Sigmoid colon (tissue), 7 donors: ENCODE measurements at regions of chr3 and their contacts with region 1.

Region 1: GRCh38 chr3:45507820-45508317 is 86.7 kb upstream of the LIMD1 start:
- DNase-seq: no peak
- H3K4me3 ChIP-seq: no peak overlapping the region
- H3K27ac ChIP-seq: peak overlapping the region; percentile 20 to 48 (median 24)
- H3K4me1 ChIP-seq: peaks cover 0 to 9% (median 0%) of the 10 kb centered on the region in 4 donors
- H3K27me3 ChIP-seq: no peaks in the 10 kb centered on the region
- CTCF ChIP-seq: no peak
- EP300 ChIP-seq: no peak
- POLR2A ChIP-seq: no peak

Region 2: DNA sequence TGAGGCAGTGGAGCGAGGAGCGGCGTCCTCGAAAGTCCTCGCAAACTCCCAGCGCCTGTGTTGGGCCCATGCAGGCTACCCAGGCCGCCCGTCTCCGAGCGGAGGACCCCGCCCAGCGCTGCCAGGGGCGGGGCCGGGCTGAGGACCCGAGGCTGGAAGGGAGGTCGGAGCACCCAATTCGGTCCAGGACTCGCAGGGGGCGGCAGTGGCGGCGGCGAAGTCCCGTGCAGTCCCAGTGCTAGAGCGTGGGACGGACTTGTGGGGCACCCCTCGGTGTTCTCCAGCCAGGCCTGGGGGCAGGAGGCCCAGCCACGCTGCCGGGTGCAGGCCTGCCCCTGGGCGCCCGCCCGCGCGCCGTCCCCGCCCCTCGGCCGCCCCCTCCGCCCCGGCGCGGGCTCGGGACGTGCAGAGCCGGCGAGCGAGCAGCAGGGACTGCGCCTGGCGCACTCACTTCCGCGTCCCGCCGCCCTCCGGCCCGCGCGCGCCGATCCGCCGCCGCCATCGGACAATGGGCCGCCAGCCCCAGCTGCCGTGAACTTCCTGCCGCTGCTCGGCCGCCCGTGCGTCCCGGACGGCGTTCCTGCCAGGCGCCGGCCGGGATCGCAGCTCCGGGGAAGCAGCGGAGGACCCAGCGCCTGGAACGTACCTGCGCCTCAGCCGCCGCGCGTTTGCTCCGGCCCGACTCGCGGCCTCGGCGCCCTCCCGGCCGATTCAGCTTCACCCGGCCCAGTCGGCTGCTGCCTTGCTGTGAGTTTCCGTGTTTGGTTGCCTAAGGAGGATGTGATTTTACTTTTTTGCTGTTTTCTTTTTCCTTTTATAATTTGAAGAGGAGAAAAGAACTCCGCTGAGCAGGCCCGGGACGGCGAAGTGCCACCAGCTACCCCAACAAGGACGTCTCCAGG is 86.1 kb after region 1 on chr3:
- intact Hi-C with region 1: loop called (anchors 5 kb)
- DNase-seq: peak; percentile 81
- H3K4me3 ChIP-seq: peak overlapping the region; percentile 50 to 84 (median 72)
- H3K27ac ChIP-seq: peak overlapping the region; percentile 85 to 93 (median 88)
- H3K4me1 ChIP-seq: peaks cover 0 to 59% (median 51%) of the 10 kb centered on the region in 4 donors
- H3K27me3 ChIP-seq: no peaks in the 10 kb centered on the region
- CTCF ChIP-seq: no peak
- EP300 ChIP-seq: no peak
- POLR2A ChIP-seq: no peak

Region 3: DNA sequence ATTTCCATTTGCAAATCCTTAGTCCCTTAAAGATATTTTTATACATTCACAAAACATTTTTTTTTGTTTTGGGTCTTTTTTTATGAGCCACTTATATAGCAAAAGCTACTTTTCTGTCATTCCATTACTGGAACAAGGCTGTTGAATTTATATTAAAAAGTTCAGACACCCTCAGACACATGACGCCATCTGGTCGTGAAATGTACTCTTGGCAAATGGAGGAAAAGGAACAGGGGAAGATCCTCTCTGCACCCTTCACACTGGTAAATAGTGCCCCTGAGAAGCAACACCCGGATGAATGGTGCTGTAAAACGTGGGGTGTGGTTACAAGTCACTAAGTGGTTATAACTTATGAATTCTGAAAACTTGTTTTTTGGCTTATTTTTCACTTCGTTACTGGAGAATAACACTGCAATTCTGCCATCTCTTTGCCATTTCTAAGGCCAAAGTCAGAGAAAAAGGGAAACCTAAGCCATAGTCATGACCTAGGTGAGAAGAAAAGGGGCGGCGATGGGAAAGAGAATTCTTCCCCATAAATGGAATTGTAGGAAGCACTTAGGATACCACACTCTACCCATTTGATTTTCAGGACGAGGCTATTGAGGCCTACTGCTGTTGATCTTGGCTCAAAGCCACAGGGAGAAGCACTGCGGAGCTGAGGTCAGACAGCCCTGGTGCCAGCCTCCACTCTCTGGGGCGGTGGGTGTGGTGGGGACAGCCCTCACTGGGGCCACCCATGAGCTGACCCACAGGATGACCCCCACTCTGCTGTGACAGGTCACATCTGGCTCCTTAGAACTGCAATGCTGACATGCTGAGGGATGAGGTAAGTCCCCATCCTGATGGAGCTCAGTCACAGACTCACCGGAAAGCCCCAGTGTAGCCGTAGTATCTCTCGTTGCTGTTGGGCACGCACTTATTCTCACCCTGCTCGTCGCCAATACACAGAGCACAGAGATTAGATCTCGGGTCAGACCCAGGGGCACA is 935.0 kb after region 1 on chr3:
- intact Hi-C with region 1: no loop called
- DNase-seq: no peak
- H3K4me3 ChIP-seq: no peak overlapping the region
- H3K27ac ChIP-seq: no peak overlapping the region
- H3K4me1 ChIP-seq: no peaks in the 10 kb centered on the region
- H3K27me3 ChIP-seq: no peaks in the 10 kb centered on the region
- CTCF ChIP-seq: peak in 2 of 4 experiments; percentile 66 to 72
- EP300 ChIP-seq: no peak
- POLR2A ChIP-seq: no peak